ENCODE measurements at regions of chr1 and their contacts with region 1.

Region 1: GRCh38 chr1:93629099-93630059 is 52.3 kb downstream of the BCAR3 start:
- DNase-seq: peak; percentile 61
- CTCF ChIP-seq: peak; percentile 78

Region 2: GRCh38 chr1:93426181-93426580 is 203.2 kb before region 1 on chr1:
- CTCF ChIA-PET with region 1: no interaction called
- POLR2A ChIA-PET with region 1: no interaction called
- DNase-seq: no peak
- CTCF ChIP-seq: no peak

Region 3: GRCh38 chr1:93607814-93608186 is 21.6 kb before region 1 on chr1:
- CTCF ChIA-PET with region 1: interaction called, 116 read pairs
- POLR2A ChIA-PET with region 1: no interaction called
- DNase-seq: peak; percentile 84
- CTCF ChIP-seq: no peak

Region 4: DNA sequence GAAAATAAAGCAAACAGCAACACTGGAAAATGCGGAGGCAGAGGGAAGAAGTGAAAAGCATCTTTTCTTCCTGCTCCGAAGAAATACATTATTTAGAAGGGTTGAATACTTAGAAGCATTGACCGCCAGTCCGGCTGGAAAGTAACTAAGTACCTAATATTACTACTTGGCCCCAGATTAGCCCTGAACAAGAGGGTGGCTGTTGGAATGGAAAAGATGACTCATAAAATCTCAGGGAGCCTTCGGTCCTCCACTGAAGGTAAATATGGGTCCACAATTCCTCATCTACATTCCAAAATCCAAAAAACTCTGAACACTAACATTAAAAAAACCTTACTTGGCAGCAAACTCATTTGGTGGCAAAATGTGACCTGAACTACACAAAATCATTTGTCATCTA is 12.1 kb after region 1 on chr1:
- CTCF ChIA-PET with region 1: interaction called, 62 read pairs
- POLR2A ChIA-PET with region 1: no interaction called
- DNase-seq: no peak
- CTCF ChIP-seq: no peak

Region 5: DNA sequence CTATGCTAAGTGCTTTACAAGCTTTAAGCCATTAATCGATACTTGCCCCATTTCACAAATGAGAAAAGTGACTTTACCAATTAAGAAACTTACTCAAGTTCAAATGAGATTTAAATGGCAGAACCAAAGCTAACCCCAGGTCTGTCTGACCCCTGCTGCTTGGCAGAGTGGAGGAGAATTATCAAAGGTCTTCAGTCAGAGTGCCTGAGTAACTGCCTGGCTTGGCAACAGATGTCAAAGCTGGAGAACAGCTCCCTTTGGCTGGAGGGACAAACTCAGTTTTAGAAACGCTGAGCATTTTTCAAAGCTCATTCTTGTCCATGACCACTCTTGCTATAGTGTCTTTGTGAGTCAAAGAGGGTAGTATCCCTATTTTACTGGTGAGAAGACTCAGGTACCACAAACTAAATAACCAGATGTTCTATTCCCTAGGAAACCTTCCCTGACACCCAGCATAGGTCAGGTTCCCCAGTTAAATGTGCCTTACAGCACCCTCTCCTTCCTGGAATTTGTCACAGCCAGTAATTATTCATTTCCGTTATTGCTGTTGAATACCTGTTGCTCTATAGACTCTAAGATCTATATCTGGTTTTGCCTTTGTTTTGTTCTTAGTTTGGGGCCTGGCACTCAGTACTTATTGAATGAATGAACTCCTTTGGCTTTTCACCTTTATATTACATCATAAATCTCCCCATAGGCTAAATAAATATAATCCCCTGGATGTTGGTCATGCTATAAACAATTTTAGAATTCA is 57.3 kb after region 1 on chr1:
- CTCF ChIA-PET with region 1: interaction called, 16 read pairs
- POLR2A ChIA-PET with region 1: no interaction called
- DNase-seq: no peak
- CTCF ChIP-seq: no peak

Region 6: DNA sequence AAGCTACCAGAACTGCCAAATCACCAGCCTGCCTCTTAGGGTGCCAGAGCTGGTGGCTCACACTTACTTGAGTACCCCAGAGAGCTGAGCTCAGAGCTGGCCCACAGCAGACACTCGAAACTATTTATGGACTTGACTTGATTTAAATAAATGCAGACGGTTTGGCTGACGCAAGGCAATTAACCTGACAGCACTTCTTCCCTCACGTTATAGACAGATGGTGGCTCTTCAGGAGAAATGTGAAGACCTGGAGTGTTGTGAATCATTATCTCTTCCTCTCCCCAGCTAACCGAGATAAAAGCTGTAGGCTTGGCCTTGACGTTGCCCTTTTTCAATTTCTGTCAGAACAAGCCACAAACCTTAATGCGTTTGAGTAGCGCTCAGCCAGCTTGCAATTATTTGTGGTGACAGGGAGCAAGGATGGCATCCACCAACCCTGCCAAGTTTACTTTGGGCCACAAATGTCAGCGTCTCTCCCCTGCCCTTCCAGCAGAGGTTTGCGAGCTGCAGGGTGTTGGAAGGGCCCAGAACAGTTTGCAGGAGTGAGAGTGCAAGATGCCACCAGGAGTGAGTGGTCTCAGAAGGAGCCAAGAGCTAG is 86.2 kb after region 1 on chr1:
- CTCF ChIA-PET with region 1: interaction called, 16 read pairs
- POLR2A ChIA-PET with region 1: no interaction called
- DNase-seq: no peak
- CTCF ChIP-seq: no peak

Region 7: GRCh38 chr1:93814059-93814794 is 184.8 kb after region 1 on chr1:
- CTCF ChIA-PET with region 1: interaction called, 628 read pairs
- POLR2A ChIA-PET with region 1: no interaction called
- DNase-seq: peak; percentile 61
- CTCF ChIP-seq: peak; percentile 94

Region 8: GRCh38 chr1:93846211-93846991 is 217.0 kb after region 1 on chr1:
- CTCF ChIA-PET with region 1: interaction called, 81 read pairs
- POLR2A ChIA-PET with region 1: no interaction called
- DNase-seq: peak; percentile 87
- CTCF ChIP-seq: peak; percentile 28

Measured in GM10248 (cell line).